ENCODE measurements at regions of chr9 and their contacts with region 1.

Region 1: GRCh38 chr9:131366761-131367401 is 27.0 kb upstream of the PRRC2B start:
- DNase-seq: peak; percentile 80 to 85
- H3K4me3 ChIP-seq: no peak overlapping the region
- H3K4me3 Mint-ChIP-seq: no peak overlapping the region
- H3K27ac Mint-ChIP-seq: peak overlapping the region; percentile 88
- H3K4me1 ChIP-seq: peaks cover 10% of the 10 kb centered on the region; the same call in 1 of the 2 replicates
- H3K4me1 Mint-ChIP-seq: peaks cover 10% of the 10 kb centered on the region
- H3K27me3 ChIP-seq: no peaks in the 10 kb centered on the region
- H3K27me3 Mint-ChIP-seq: no peaks in the 10 kb centered on the region
- CTCF ChIP-seq: peak; percentile 51 to 58

Region 2: GRCh38 chr9:130866474-130866965 is 500.4 kb before region 1 on chr9:
- CTCF ChIA-PET with region 1: no interaction called
- POLR2A ChIA-PET with region 1: no interaction called
- intact Hi-C with region 1: no loop called
- DNase-seq: peak; percentile 90
- H3K4me3 ChIP-seq: no peak overlapping the region
- H3K4me3 Mint-ChIP-seq: no peak overlapping the region
- H3K27ac Mint-ChIP-seq: no peak overlapping the region
- H3K4me1 ChIP-seq: peaks cover 6% of the 10 kb centered on the region
- H3K4me1 Mint-ChIP-seq: no peaks in the 10 kb centered on the region
- H3K27me3 ChIP-seq: no peaks in the 10 kb centered on the region
- H3K27me3 Mint-ChIP-seq: no peaks in the 10 kb centered on the region
- CTCF ChIP-seq: peak; percentile 85 to 90

Region 3: GRCh38 chr9:131382850-131383729 is 16.2 kb after region 1 on chr9:
- CTCF ChIA-PET with region 1: no interaction called
- POLR2A ChIA-PET with region 1: interaction called, 20 read pairs
- intact Hi-C with region 1: no loop called
- DNase-seq: peak; percentile 57 to 70
- H3K4me3 ChIP-seq: no peak overlapping the region
- H3K4me3 Mint-ChIP-seq: peak overlapping the region; percentile 19
- H3K27ac Mint-ChIP-seq: peak overlapping the region; percentile 88
- H3K4me1 ChIP-seq: peaks cover 11% of the 10 kb centered on the region
- H3K4me1 Mint-ChIP-seq: peaks cover 9% of the 10 kb centered on the region
- H3K27me3 ChIP-seq: no peaks in the 10 kb centered on the region
- H3K27me3 Mint-ChIP-seq: no peaks in the 10 kb centered on the region
- CTCF ChIP-seq: no peak

Region 4: GRCh38 chr9:131423171-131423581 is 56.3 kb after region 1 on chr9:
- CTCF ChIA-PET with region 1: no interaction called
- POLR2A ChIA-PET with region 1: no interaction called
- intact Hi-C with region 1: loop called (anchors 5 kb)
- DNase-seq: no peak
- H3K4me3 ChIP-seq: no peak overlapping the region
- H3K4me3 Mint-ChIP-seq: no peak overlapping the region
- H3K27ac Mint-ChIP-seq: no peak overlapping the region
- H3K4me1 ChIP-seq: peaks cover 7% of the 10 kb centered on the region
- H3K4me1 Mint-ChIP-seq: peaks cover 31% of the 10 kb centered on the region
- H3K27me3 ChIP-seq: no peaks in the 10 kb centered on the region
- H3K27me3 Mint-ChIP-seq: no peaks in the 10 kb centered on the region
- CTCF ChIP-seq: no peak

Region 5: DNA sequence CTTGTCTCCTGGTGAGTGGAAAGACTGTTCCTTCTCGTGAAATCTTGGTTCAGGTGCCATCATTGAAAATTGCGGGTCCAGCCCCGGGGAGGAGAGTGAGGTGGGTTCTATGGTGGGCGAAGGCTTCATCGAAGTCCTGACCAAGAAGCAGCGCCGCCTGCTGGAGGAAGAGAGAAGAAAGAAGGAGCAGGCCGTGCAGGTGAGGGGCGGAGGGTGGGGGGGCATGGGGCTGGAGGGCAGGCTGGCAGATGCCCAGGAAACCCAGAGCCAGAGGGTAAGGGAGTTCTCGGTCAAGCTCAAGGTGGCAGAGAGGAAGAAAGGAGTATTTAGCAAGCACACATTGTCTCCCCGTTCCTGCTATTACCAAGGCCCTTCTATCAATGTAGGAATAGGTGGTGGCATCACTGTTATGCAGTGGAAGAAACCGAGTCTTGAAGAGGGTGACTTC is 111.6 kb after region 1 on chr9:
- CTCF ChIA-PET with region 1: interaction called, 3 read pairs
- POLR2A ChIA-PET with region 1: no interaction called
- intact Hi-C with region 1: loop called (anchors 10 kb)
- DNase-seq: peak in 1 of 2 experiments; percentile 61
- H3K4me3 ChIP-seq: no peak overlapping the region
- H3K4me3 Mint-ChIP-seq: no peak overlapping the region
- H3K27ac Mint-ChIP-seq: peak overlapping the region; percentile 26
- H3K4me1 ChIP-seq: no peaks in the 10 kb centered on the region
- H3K4me1 Mint-ChIP-seq: no peaks in the 10 kb centered on the region
- H3K27me3 ChIP-seq: no peaks in the 10 kb centered on the region
- H3K27me3 Mint-ChIP-seq: no peaks in the 10 kb centered on the region
- CTCF ChIP-seq: peak; percentile 44 to 64

Region 6: GRCh38 chr9:131502781-131503625 is 136.1 kb after region 1 on chr9 and contains the start of gene POMT1:
- CTCF ChIA-PET with region 1: no interaction called
- POLR2A ChIA-PET with region 1: no interaction called
- intact Hi-C with region 1: loop called (anchors 5 kb)
- DNase-seq: peak; percentile 90 to 93
- H3K4me3 ChIP-seq: peak within 1 kb of the TSS; percentile 89
- H3K4me3 Mint-ChIP-seq: peak within 1 kb of the TSS; percentile 90
- H3K27ac Mint-ChIP-seq: peak within 1 kb of the TSS; percentile 81
- H3K4me1 ChIP-seq: 0 out of 2 replicates have a peak, but pooled peaks cover 6% of the 10 kb centered on the region
- H3K4me1 Mint-ChIP-seq: peaks cover 16% of the 10 kb centered on the region
- H3K27me3 ChIP-seq: no peaks in the 10 kb centered on the region
- H3K27me3 Mint-ChIP-seq: no peaks in the 10 kb centered on the region
- CTCF ChIP-seq: no peak
- total RNA-seq, gene POMT1: 44.2 and 44.7 TPM in 2 replicates

Region 7: GRCh38 chr9:131982671-131983239 is 615.9 kb after region 1 on chr9:
- CTCF ChIA-PET with region 1: no interaction called
- POLR2A ChIA-PET with region 1: no interaction called
- intact Hi-C with region 1: no loop called
- DNase-seq: no peak
- H3K4me3 ChIP-seq: no peak overlapping the region
- H3K4me3 Mint-ChIP-seq: no peak overlapping the region
- H3K27ac Mint-ChIP-seq: no peak overlapping the region
- H3K4me1 ChIP-seq: no peaks in the 10 kb centered on the region
- H3K4me1 Mint-ChIP-seq: peaks cover 8% of the 10 kb centered on the region
- H3K27me3 ChIP-seq: no peaks in the 10 kb centered on the region
- H3K27me3 Mint-ChIP-seq: no peaks in the 10 kb centered on the region
- CTCF ChIP-seq: no peak

Measured in Caco-2 (cell line).